ENCODE measurements at regions of chr17 and their contacts with region 1.

Region 1: GRCh38 chr17:48307814-48308411 is 122.1 kb downstream of the SKAP1 start:
- DNase-seq: peak; percentile 41
- CTCF ChIP-seq: peak; percentile 68

Region 2: DNA sequence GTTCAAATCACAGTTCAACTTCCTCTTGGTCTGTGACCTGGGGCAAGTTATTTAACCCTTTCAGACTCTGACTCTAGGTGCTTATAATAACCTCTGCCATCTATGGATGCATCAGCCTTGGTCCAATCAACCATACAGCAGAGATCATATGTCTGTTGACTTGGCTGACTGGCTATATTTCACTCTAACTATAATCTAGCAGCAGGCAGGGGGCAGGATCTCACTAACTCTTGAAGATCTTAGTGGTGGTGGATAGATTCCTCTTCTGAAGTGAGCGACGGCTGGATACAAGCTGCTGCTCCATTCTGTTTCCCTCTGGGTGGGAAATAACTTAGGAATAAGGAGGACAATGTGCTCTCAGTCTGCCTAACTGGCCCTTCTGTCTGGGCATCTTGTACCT is 24.5 kb before region 1 on chr17:
- CTCF ChIA-PET with region 1: interaction called, 19 read pairs
- POLR2A ChIA-PET with region 1: no interaction called
- DNase-seq: no peak
- CTCF ChIP-seq: no peak

Region 3: GRCh38 chr17:48295362-48296288 is 12.3 kb before region 1 on chr17:
- CTCF ChIA-PET with region 1: interaction called, 42 read pairs
- POLR2A ChIA-PET with region 1: no interaction called
- DNase-seq: peak; percentile 35
- CTCF ChIP-seq: no peak

Region 4: DNA sequence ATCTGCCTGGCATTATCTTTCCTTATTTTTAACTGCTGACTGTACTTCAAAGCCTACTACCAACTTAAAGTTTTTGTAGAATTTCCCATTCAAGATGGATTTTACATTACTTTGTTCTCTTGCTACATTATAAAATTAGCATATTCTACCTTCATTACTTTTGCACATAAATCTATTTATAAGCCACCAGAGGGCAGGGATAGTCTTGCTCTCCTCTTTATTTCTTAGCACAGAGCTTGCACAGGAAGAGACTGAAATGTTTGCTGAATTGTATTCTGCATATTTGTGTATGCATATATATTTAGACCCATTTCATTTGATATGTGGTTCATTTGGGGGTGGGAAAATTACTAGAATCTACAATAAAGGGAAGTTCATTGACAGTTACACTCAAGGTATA is 14.1 kb after region 1 on chr17:
- CTCF ChIA-PET with region 1: interaction called, 16 read pairs
- POLR2A ChIA-PET with region 1: no interaction called
- DNase-seq: no peak
- CTCF ChIP-seq: no peak